ENCODE measurements at regions of chr17 and their contacts with region 1.

Region 1: GRCh38 chr17:80991645-80992076 is at the start of gene CHMP6:
- DNase-seq: peak in 1 of 2 donors; percentile 84
- H3K4me3 ChIP-seq: peak within 1 kb of the TSS; percentile 90 to 99
- H3K27ac ChIP-seq: peak within 1 kb of the TSS in 1 of 2 donors; percentile 40
- H3K4me1 ChIP-seq: peaks cover 10 to 24% of the 10 kb centered on the region in 2 donors
- H3K27me3 ChIP-seq: no peaks in the 10 kb centered on the region
- CTCF ChIP-seq: peak in 1 of 3 experiments; percentile 69
- total RNA-seq, gene CHMP6: 32.1 TPM

Region 2: GRCh38 chr17:81034779-81035388 is 43.2 kb after region 1 on chr17 and contains the start of gene BAIAP2:
- intact Hi-C with region 1: loop called (anchors 1 kb)
- DNase-seq: peak; percentile 63 to 95
- H3K4me3 ChIP-seq: peak within 1 kb of the TSS; percentile 62 to 68
- H3K27ac ChIP-seq: no peak within 1 kb of the TSS
- H3K4me1 ChIP-seq: peaks cover 14 to 42% of the 10 kb centered on the region in 2 donors
- H3K27me3 ChIP-seq: no peaks in the 10 kb centered on the region
- CTCF ChIP-seq: no peak
- total RNA-seq, gene BAIAP2: 14.4 TPM

Region 3: DNA sequence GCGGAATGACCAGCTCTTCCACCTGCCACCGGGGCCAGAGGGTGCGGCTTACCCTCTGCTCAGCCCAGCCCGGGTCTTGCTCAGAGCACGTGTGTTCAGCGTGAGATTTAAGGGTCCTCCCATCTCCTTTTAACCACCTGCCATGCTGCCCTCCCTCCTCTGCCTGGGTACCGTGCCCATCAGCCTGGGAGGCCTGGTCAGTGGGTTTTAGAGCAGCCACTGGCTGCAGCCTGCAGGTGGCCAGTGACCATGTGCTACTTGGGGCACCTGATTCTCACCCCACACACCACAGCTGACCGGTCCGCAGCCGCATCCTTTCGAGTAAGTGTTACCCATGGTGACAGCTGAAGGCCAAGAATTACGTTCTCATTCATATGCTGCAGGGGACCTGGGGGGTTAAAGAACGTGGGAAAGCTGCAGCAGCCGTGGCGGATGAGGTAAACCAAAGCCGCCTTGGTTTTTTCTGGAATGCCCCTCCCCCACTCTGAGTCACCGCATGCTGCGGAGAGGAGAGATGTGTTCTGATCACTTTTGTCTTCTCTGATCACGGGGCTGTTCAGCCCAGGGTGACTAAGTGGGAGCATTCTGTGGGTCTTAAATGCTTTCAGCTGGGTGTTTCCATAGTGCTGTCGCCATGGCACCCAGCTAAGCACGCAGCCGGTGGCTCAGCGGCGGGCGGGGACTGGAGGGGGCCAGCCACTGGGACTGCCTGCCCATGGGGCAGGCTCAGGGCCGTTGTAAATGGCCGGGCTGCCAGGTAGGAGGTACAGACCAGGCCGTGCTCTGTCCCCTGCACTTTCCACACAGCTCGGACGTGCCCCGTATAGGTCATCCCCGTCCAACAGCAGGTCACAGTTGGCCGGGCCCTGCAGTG is 103.1 kb after region 1 on chr17:
- intact Hi-C with region 1: loop called (anchors 1 kb)
- DNase-seq: peak; percentile 77 to 89
- H3K4me3 ChIP-seq: peak overlapping the region in 1 of 2 donors; percentile 33
- H3K27ac ChIP-seq: peak overlapping the region; percentile 12 to 37
- H3K4me1 ChIP-seq: peaks cover 14 to 18% of the 10 kb centered on the region in 2 donors
- H3K27me3 ChIP-seq: no peaks in the 10 kb centered on the region
- CTCF ChIP-seq: no peak

Region 4: DNA sequence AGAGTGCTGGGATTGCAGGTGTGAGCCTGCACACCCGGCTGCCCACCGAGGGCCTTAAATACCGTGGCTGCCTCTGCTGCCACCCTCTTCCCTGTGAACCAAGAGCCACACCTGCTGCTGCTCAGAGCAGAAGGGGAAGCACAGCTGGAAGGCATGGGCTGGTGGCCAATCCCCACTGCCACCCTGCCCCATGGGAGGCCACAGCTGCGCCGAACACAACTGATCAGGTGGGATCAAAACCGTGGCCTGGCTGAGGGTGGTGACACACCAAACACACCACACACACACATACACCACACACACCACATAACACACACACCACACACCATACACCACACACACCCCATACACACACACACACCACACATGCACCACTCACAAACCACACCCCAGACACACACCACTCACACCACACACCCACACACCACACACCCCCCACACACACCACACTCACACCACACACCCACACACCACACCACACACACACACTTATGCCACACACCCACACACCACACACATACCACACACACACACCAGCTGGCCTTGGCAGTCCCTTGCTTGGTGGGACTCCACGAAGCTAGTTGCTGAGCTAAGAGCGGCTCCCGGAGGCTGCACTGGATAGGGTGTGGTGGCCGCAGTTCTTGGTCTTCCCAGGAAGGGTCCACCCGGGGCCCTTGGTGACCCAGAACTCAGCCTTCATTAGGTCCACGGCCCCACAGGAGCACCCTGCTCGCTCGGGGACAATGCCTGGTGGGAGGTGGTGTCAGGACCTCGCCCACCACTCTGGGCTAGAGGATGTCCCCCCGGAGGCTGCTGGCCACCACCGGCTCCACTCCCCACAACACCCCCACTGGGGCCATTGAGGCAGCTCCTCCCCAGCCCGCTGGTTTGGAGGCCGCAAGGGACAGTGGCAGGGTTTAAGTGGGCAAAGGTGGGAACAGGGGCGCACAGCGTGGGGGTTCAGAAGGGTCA is 216.2 kb after region 1 on chr17:
- intact Hi-C with region 1: no loop called
- DNase-seq: no peak
- H3K4me3 ChIP-seq: no peak overlapping the region
- H3K27ac ChIP-seq: no peak overlapping the region
- H3K4me1 ChIP-seq: peaks cover 0 to 6% of the 10 kb centered on the region in 2 donors
- H3K27me3 ChIP-seq: no peaks in the 10 kb centered on the region
- CTCF ChIP-seq: no peak

Measured in ascending aorta (tissue), 2 donors.